ENCODE measurements at regions of chr10 and their contacts with region 1.

Region 1: GRCh38 chr10:43348511-43349312 is 22.7 kb upstream of the FXYD4 start:
- DNase-seq: peak; percentile 96
- H3K4me3 Mint-ChIP-seq: peak overlapping the region; percentile 26
- H3K27ac Mint-ChIP-seq: peak overlapping the region; percentile 32
- H3K4me1 Mint-ChIP-seq: peaks cover 18% of the 10 kb centered on the region
- H3K27me3 Mint-ChIP-seq: peaks cover 21% of the 10 kb centered on the region

Region 2: GRCh38 chr10:43105102-43105785 is 243.5 kb before region 1 on chr10:
- intact Hi-C with region 1: no loop called
- DNase-seq: peak; percentile 95
- H3K4me3 Mint-ChIP-seq: peak overlapping the region; percentile 82
- H3K27ac Mint-ChIP-seq: peak overlapping the region; percentile 65
- H3K4me1 Mint-ChIP-seq: peaks cover 13% of the 10 kb centered on the region
- H3K27me3 Mint-ChIP-seq: peaks cover 20% of the 10 kb centered on the region

Region 3: DNA sequence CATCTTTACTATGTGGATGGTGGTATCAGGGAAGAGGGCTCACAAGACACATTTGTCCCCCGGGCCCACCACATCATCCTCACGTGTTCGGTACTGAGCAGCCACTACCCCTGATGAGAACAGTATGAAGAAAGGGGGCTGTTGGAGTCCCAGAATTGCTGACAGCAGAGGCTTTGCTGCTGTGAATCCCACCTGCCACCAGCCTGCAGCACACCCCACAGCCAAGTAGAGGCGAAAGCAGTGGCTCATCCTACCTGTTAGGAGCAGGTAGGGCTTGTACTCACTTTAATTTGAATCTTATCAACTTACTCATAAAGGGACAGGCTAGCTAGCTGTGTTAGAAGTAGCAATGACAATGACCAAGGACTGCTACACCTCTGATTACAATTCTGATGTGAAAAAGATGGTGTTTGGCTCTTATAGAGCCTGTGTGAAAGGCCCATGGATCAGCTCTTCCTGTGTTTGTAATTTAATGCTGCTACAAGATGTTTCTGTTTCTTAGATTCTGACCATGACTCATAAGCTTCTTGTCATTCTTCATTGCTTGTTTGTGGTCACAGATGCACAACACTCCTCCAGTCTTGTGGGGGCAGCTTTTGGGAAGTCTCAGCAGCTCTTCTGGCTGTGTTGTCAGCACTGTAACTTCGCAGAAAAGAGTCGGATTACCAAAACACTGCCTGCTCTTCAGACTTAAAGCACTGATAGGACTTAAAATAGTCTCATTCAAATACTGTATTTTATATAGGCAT is 219.6 kb before region 1 on chr10:
- intact Hi-C with region 1: loop called (anchors 5 kb)
- DNase-seq: peak; percentile 85
- H3K4me3 Mint-ChIP-seq: peak overlapping the region; percentile 66
- H3K27ac Mint-ChIP-seq: peak overlapping the region; percentile 91
- H3K4me1 Mint-ChIP-seq: peaks cover 60% of the 10 kb centered on the region
- H3K27me3 Mint-ChIP-seq: no peaks in the 10 kb centered on the region

Region 4: GRCh38 chr10:43204943-43205671 is 143.6 kb before region 1 on chr10:
- intact Hi-C with region 1: loop called (anchors 2 kb)
- DNase-seq: peak; percentile 84
- H3K4me3 Mint-ChIP-seq: no peak overlapping the region
- H3K27ac Mint-ChIP-seq: no peak overlapping the region
- H3K4me1 Mint-ChIP-seq: peaks cover 6% of the 10 kb centered on the region
- H3K27me3 Mint-ChIP-seq: no peaks in the 10 kb centered on the region

Region 5: GRCh38 chr10:43229208-43230061 is 119.3 kb before region 1 on chr10:
- intact Hi-C with region 1: loop called (anchors 5 kb)
- DNase-seq: peak; percentile 80
- H3K4me3 Mint-ChIP-seq: peak overlapping the region; percentile 77
- H3K27ac Mint-ChIP-seq: peak overlapping the region; percentile 69
- H3K4me1 Mint-ChIP-seq: peaks cover 43% of the 10 kb centered on the region
- H3K27me3 Mint-ChIP-seq: peaks cover 42% of the 10 kb centered on the region

Region 6: GRCh38 chr10:43265799-43266721 is 82.7 kb before region 1 on chr10:
- intact Hi-C with region 1: loop called (anchors 1 kb)
- DNase-seq: peak; percentile 81
- H3K4me3 Mint-ChIP-seq: peak overlapping the region; percentile 75
- H3K27ac Mint-ChIP-seq: no peak overlapping the region
- H3K4me1 Mint-ChIP-seq: peaks cover 7% of the 10 kb centered on the region
- H3K27me3 Mint-ChIP-seq: peaks cover 54% of the 10 kb centered on the region

Region 7: DNA sequence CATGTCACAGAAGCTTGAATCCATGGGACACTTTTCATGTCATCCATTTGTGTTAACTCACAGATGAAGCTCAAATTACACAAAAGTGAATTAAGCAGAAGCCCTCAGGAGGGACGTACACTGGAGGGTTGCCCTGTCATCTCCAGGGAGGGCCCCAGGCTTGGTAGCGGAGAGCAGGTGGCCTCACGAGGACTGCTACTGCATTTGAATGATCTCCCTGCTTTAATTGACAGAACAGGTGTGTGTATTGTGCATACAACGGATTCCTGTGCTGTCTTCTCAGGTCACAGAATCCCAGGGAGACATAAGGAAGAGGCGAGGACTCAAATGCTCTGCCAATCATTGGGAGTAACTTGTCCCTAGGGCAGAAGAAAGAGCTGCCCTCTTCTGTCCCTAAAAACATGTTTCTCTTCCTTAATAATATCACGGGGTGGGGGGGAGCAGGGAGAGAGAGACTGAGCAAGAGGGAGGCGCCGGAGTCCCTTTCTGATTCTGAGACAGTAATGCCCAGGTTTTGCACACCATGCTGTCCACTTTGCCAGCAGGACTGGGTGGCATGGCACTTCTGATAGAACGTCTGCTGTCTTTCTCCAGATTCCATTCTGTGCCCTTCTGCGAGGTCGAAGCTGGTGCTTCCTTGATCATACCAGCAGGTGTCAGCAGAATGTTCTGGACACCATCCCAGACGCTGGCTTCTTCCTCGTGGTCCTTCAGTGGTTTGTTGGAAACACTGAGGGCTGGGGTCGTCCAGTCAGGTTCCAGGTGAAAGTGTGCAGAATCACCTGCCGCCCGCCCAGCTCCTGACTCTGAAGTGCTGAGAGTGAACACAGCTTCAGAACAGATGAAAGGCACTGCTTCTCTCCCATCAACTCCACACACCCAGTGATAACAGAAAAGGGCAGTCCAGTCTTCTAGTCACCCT is 55.7 kb before region 1 on chr10:
- intact Hi-C with region 1: loop called (anchors 1 kb)
- DNase-seq: peak; percentile 86
- H3K4me3 Mint-ChIP-seq: peak overlapping the region; percentile 63
- H3K27ac Mint-ChIP-seq: peak overlapping the region; percentile 51
- H3K4me1 Mint-ChIP-seq: peaks cover 50% of the 10 kb centered on the region
- H3K27me3 Mint-ChIP-seq: no peaks in the 10 kb centered on the region

Region 8: DNA sequence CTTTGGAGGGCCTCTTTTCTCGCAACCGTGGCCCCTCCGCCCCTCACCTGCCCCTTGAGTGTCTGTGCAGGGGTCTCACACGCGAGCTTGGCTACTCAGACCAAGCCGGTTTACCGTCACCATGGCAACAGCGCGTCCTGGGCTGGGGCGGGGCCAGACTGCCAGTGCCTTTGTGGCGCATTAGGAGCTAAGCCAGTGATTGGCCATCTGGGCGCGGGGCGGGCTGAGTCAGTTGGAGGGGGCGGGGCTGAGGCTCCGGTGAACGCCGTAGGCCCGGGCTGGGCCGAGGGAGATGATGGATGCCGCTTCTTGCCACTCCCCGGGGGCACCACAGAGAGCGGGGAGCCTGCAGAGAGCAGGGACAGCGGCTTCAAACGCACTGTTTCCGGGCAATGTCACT is 25.9 kb before region 1 on chr10:
- intact Hi-C with region 1: no loop called
- DNase-seq: peak; percentile 96
- H3K4me3 Mint-ChIP-seq: peak overlapping the region; percentile 72
- H3K27ac Mint-ChIP-seq: no peak overlapping the region
- H3K4me1 Mint-ChIP-seq: peaks cover 20% of the 10 kb centered on the region
- H3K27me3 Mint-ChIP-seq: peaks cover 8% of the 10 kb centered on the region

Region 9: GRCh38 chr10:43380610-43381222 is 32.0 kb after region 1 on chr10:
- intact Hi-C with region 1: no loop called
- DNase-seq: no peak
- H3K4me3 Mint-ChIP-seq: no peak overlapping the region
- H3K27ac Mint-ChIP-seq: no peak overlapping the region
- H3K4me1 Mint-ChIP-seq: no peaks in the 10 kb centered on the region
- H3K27me3 Mint-ChIP-seq: peaks cover 2% of the 10 kb centered on the region

Region 10: GRCh38 chr10:43461950-43462349 is 113.2 kb after region 1 on chr10:
- intact Hi-C with region 1: loop called (anchors 2 kb)
- DNase-seq: peak; percentile 87
- H3K4me3 Mint-ChIP-seq: no peak overlapping the region
- H3K27ac Mint-ChIP-seq: no peak overlapping the region
- H3K4me1 Mint-ChIP-seq: peaks cover 9% of the 10 kb centered on the region
- H3K27me3 Mint-ChIP-seq: no peaks in the 10 kb centered on the region

Measured in activated CD4-positive, alpha-beta T cell treated with anti-CD3 and anti-CD28 coated beads, Interleukin-2, amount 10 ng/mL, durations not matched to agents 24 days and 14 days (primary cell).